PC-9 (cell line): ENCODE measurements at regions of chr9 and their contacts with region 1.

Region 1: GRCh38 chr9:90433398-90433941 is 209.2 kb downstream of the DIRAS2 start:
- DNase-seq: peak; percentile 88 to 93
- H3K4me3 ChIP-seq: peak overlapping the region; percentile 55
- H3K27ac ChIP-seq: peak overlapping the region; percentile 93
- H3K4me1 ChIP-seq: peaks cover 31% of the 10 kb centered on the region
- H3K27me3 ChIP-seq: no peaks in the 10 kb centered on the region
- CTCF ChIP-seq: no peak

Region 2: GRCh38 chr9:90219548-90220118 is 213.8 kb before region 1 on chr9:
- CTCF ChIA-PET with region 1: no interaction called
- POLR2A ChIA-PET with region 1: no interaction called
- intact Hi-C with region 1: loop called (anchors 10 kb)
- DNase-seq: peak in 1 of 2 experiments; percentile 8
- H3K4me3 ChIP-seq: no peak overlapping the region
- H3K27ac ChIP-seq: no peak overlapping the region
- H3K4me1 ChIP-seq: no peaks in the 10 kb centered on the region
- H3K27me3 ChIP-seq: peaks cover 4% of the 10 kb centered on the region; the same call in 1 of the 2 replicates
- CTCF ChIP-seq: peak; percentile 52; the same call in 1 of the 2 replicates

Region 3: DNA sequence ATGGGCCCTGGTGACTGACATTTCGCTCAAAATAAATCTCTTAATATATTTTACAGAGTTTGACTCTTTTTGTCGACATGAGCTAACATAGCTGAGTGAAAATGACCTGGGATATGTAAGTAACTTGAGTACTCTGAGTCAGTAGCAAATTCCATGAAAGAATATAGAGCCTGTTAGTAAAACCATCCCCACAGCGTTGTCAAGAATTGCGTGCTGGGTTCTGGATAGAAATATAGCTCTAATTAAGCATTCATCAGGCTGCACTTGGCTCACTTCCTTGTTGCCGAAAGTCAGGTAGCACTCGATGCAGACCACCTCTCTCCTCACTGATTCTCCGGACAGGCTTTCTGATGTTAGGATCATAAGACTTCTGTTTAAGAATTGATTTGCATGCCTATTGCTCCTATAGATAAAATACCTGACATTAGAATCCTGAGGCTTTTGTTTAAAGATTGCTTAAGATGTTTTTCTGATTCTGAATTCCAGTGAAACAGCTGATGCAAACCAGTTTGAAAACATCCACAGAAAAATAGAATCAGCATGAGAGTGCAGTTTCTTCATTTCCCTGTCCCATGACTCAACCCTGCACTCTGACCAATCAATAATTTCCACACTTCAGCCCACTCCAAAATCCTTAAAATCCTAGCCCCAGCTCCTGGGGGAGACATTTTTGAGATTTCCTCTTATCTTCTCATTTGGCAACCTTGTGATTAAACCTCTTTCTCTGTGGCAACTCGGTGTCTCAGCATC is 101.5 kb before region 1 on chr9:
- CTCF ChIA-PET with region 1: no interaction called
- POLR2A ChIA-PET with region 1: no interaction called
- intact Hi-C with region 1: loop called (anchors 1 kb)
- DNase-seq: peak; percentile 55 to 88
- H3K4me3 ChIP-seq: peak overlapping the region; percentile 31; the same call in 1 of the 2 replicates
- H3K27ac ChIP-seq: peak overlapping the region; percentile 98
- H3K4me1 ChIP-seq: peaks cover 37% of the 10 kb centered on the region
- H3K27me3 ChIP-seq: no peaks in the 10 kb centered on the region
- CTCF ChIP-seq: no peak